ENCODE measurements at regions of chr1 and their contacts with region 1.

Region 1: DNA sequence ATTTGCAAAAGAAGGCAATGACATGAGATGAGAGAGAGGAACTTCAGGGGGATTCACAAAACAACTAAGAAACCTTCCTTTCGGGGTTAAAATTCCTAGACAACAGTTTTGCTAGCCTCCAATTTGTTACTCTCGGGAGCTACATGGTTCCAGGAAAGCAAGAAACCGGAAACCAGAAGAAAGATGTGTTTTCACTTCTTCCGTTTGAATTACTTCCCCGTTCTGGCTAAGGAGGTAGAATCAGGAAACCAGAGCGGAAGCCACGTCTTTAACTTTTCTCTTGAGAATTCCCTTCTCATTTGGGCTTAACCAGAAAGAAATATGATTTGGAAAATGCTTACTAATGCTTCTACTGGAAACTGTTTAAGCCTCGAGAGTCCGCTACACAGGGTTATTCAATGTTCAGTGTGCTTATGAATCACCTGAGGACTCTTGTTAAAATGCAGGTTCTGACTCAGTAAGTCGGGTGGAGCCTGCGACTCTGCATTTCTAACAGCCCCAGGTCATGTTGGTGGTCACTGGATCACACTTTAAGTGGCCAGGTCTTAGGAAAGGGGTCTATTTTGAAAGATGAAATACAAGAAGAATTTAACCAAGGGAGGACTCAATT is 43.5 kb upstream of the MCOLN3 start:
- DNase-seq: peak; percentile 41
- ATAC-seq: peak; percentile 94
- H3K4me3 Mint-ChIP-seq: peak overlapping the region; percentile 45
- H3K27ac Mint-ChIP-seq: peak overlapping the region; percentile 64
- H3K4me1 Mint-ChIP-seq: peaks cover 4% of the 10 kb centered on the region
- H3K27me3 Mint-ChIP-seq: peaks cover 13% of the 10 kb centered on the region

Region 2: GRCh38 chr1:85061711-85062424 is 29.9 kb before region 1 on chr1:
- CTCF ChIA-PET with region 1: interaction called, 4 read pairs
- POLR2A ChIA-PET with region 1: no interaction called
- intact Hi-C with region 1: loop called in 1 of 2 experiments (anchors 2 kb)
- DNase-seq: peak; percentile 91
- ATAC-seq: peak; percentile 100
- H3K4me3 Mint-ChIP-seq: peak overlapping the region; percentile 74
- H3K27ac Mint-ChIP-seq: peak overlapping the region; percentile 66
- H3K4me1 Mint-ChIP-seq: peaks cover 13% of the 10 kb centered on the region
- H3K27me3 Mint-ChIP-seq: peaks cover 12% of the 10 kb centered on the region

Region 3: DNA sequence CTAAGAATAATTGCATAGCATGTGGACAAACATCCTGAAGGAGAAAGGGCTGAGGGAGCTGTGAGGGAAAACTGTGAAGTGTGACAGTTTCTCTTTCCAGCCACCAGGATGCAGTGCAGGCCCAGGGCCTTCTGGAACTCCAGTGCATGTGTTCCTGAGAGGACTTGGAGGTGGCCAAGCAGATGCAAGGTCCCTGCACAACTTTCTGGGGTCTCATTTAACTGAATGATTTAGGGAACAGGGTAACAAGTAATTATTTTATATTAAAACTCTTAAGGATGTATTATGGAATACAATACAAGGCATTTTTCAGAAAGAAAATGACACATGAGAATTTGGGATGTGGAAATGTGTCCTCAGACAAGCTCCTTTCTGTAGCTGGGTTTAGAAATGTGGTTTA is 17.7 kb after region 1 on chr1:
- CTCF ChIA-PET with region 1: interaction called, 10 read pairs
- POLR2A ChIA-PET with region 1: no interaction called
- intact Hi-C with region 1: no loop called
- DNase-seq: peak; percentile 58
- ATAC-seq: peak; percentile 78
- H3K4me3 Mint-ChIP-seq: no peak overlapping the region
- H3K27ac Mint-ChIP-seq: no peak overlapping the region
- H3K4me1 Mint-ChIP-seq: no peaks in the 10 kb centered on the region
- H3K27me3 Mint-ChIP-seq: peaks cover 5% of the 10 kb centered on the region

Measured in activated CD4-positive, alpha-beta T cell treated with anti-CD3 and anti-CD28 coated beads for 36 hours (primary cell).